Right ventricle myocardium superior (tissue), 1 donor: ENCODE measurements at regions of chr4 and their contacts with region 1.

Region 1: GRCh38 chr4:137124278-137124932 is 407.9 kb downstream of the PCDH18 start:
- DNase-seq: no peak
- ATAC-seq: peak; percentile 97

Region 2: DNA sequence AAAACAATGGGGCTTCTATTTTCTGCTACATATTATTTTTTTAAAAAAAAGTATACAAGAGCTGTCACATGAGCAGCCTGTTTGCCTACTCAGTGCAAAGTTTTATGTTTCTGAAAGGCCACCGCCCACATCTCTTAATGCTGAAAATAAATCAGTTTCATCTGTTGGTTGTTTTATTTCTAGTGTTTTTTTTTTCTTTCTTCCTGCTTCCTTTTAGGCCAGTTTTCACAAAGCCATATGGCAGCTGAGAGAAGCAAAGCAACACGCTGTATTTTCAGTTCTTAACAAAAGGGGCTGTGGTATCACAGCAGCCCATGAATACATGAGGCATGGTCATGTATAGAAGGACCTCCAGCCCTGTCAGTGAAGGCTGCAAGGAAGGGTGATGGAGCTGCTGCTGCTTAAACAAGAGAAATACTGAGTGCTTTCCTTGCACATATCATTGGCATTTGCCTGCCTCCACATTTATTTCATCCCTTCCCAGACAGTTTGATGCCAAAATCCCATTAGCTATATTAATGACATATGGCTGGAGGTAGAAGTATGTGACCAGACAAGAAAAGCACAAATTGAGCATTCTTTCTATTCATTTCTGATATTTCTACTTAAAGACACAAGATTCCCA is 235.4 kb after region 1 on chr4:
- intact Hi-C with region 1: no loop called
- DNase-seq: no peak
- ATAC-seq: no peak

Region 3: DNA sequence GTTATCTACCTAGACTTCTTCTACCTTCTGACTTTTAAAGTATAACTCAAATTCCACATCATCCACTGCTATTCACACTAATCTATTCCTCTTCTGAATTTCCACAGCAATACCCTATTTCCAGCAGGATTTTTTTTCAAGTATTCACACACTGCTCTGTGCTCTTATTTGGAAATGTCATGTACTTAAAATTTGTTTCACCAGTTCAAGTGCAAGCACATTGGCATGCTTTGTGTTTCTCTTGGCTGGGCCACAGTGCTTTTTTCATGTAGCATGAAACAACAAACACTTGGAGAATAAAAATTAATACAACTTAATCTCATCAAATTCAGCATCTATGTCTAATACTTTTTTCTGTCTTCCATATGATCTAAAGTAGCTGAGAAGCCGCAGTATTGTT is 569.7 kb after region 1 on chr4:
- intact Hi-C with region 1: no loop called
- DNase-seq: no peak
- ATAC-seq: peak; percentile 74

Region 4: GRCh38 chr4:137861682-137862081 is 737.3 kb after region 1 on chr4:
- intact Hi-C with region 1: loop called (anchors 10 kb)
- DNase-seq: no peak
- ATAC-seq: no peak